Activated T-helper 1 cell treated with anti-CD3 and anti-CD28 coated beads, Interleukin-12 subunit alpha, Interleukin-12 subunit beta, Interleukin-2, Interleukin-4 antibody, amounts not matched to agents 30 ng/mL and 10 ng/mL and 1 ng/mL, durations not matched to agents 14 hours and 24 hours and 36 hours (primary cell): ENCODE measurements at regions of chr17 and their contacts with region 1.

Region 1: DNA sequence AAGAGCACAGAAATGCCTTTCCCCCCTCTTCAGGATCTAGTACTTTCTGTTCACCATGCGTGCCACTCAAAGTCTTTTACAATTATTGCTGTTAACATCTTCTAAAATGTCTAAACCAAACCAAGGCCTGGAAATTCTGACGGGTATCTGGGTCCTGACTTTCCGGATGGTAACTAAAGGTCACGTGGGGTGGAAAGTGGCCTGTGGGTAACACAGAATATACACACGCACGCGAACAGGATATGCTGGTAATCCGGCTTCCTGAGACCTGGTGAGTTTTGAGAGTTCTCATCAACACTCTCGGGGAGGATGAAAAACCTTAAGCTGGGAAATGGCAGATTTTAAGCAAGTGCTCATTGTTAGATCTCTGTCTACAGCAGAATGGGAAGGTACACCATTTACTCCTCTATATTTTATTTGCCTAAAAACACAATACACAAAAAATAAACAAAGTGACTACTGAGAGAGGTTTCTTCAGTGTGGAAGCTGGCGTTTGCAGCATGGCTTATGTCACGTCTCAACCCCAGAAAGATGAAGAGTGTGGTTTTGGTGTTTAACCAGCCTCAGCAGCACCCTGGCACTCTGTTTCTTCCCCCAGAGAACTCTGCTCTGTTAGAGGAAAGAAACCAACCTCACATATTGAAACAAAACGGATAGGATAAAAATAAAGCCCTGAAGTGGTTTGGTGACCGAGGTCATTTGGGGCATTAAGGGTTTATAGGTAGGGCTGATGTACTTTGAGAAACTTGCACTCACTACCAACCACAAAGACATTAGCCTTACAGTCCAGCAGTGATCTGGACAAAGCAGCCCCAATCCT is 37.3 kb downstream of the SMG6 start:
- DNase-seq: peak; percentile 88
- H3K4me3 Mint-ChIP-seq: peak overlapping the region; percentile 74
- H3K27ac Mint-ChIP-seq: peak overlapping the region; percentile 100
- H3K4me1 Mint-ChIP-seq: peaks cover 82% of the 10 kb centered on the region
- H3K27me3 Mint-ChIP-seq: no peaks in the 10 kb centered on the region

Region 2: GRCh38 chr17:1870592-1870991 is 395.7 kb before region 1 on chr17:
- intact Hi-C with region 1: loop called (anchors 1 kb)
- DNase-seq: peak; percentile 28
- H3K4me3 Mint-ChIP-seq: peak overlapping the region; percentile 62
- H3K27ac Mint-ChIP-seq: peak overlapping the region; percentile 99
- H3K4me1 Mint-ChIP-seq: peaks cover 75% of the 10 kb centered on the region
- H3K27me3 Mint-ChIP-seq: no peaks in the 10 kb centered on the region

Region 3: DNA sequence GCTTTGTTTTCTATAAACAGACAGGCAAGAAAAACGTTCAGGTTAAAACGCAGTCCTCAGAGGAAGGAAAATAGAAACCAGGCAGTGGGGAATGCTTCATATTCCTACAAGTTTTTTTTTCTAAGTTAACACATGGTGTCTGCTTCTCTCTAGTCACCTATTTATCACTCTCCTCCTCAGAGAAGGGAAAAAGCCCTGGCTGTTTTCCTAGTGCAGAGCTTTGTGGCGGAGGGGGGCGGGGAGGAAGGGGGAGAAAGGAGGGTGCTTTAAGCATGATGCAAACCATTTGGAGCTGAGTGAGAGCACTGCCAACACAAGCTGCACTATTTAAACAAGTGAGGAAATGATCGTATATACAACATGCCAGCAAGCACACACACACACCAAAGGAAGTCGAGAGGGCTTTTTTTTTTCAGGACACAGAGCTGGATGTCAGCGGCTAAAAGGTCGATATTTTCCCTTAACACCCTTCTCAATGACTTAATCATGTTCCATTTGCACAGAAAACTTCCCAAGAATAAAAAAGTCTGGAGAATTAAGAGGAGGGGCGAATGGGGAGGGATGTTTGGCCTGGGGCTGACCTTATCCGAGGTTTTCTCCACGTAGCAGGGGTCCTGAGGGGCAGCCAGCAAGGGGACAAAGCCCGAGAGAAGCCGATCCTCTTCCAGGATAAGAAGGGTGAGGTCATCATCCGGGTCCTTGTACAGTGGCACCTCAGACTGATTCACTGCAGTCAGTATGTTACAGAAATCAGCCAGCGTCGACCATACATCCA is 94.0 kb before region 1 on chr17:
- intact Hi-C with region 1: no loop called
- DNase-seq: no peak
- H3K4me3 Mint-ChIP-seq: no peak overlapping the region
- H3K27ac Mint-ChIP-seq: no peak overlapping the region
- H3K4me1 Mint-ChIP-seq: peaks cover 27% of the 10 kb centered on the region
- H3K27me3 Mint-ChIP-seq: no peaks in the 10 kb centered on the region

Region 4: GRCh38 chr17:2222901-2223616 is 43.2 kb before region 1 on chr17:
- intact Hi-C with region 1: loop called (anchors 1 kb)
- DNase-seq: peak; percentile 78
- H3K4me3 Mint-ChIP-seq: peak overlapping the region; percentile 65
- H3K27ac Mint-ChIP-seq: peak overlapping the region; percentile 84
- H3K4me1 Mint-ChIP-seq: peaks cover 60% of the 10 kb centered on the region
- H3K27me3 Mint-ChIP-seq: no peaks in the 10 kb centered on the region

Region 5: DNA sequence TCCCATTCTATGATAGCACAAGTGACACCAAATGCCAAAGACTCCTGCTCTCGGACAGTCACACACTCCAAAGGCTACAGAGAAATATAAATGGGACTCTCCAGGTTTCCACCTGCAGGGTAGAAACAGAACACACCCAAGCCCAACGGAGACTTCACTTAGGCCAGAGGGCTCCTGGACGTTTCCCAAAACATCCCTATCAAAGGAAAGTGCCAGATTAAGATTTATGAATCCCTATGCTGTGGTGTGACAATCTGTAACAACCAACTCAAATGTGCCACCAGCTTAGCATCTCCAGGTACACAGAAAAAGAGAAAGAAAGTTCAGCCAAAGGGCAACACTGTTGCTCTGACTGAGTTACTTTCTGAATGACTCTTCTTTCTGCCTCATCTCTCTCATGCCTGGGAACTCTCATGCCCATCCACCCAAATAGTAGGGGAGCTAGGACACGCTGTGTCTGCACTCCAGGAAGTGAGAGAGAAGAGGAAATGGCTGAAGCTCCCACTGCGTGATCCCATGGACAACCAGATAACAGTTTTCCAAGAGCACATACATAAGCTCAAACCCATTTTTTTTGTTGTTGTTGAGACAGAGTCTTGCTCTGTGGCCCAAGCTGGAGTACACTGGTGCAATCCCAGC is 12.4 kb before region 1 on chr17:
- intact Hi-C with region 1: loop called (anchors 1 kb)
- DNase-seq: peak; percentile 53
- H3K4me3 Mint-ChIP-seq: peak overlapping the region; percentile 63
- H3K27ac Mint-ChIP-seq: peak overlapping the region; percentile 97
- H3K4me1 Mint-ChIP-seq: peaks cover 63% of the 10 kb centered on the region
- H3K27me3 Mint-ChIP-seq: no peaks in the 10 kb centered on the region

Region 6: GRCh38 chr17:2282297-2282873 is 16.1 kb after region 1 on chr17:
- intact Hi-C with region 1: loop called (anchors 1 kb)
- DNase-seq: no peak
- H3K4me3 Mint-ChIP-seq: no peak overlapping the region
- H3K27ac Mint-ChIP-seq: peak overlapping the region; percentile 76
- H3K4me1 Mint-ChIP-seq: peaks cover 45% of the 10 kb centered on the region
- H3K27me3 Mint-ChIP-seq: no peaks in the 10 kb centered on the region

Region 7: DNA sequence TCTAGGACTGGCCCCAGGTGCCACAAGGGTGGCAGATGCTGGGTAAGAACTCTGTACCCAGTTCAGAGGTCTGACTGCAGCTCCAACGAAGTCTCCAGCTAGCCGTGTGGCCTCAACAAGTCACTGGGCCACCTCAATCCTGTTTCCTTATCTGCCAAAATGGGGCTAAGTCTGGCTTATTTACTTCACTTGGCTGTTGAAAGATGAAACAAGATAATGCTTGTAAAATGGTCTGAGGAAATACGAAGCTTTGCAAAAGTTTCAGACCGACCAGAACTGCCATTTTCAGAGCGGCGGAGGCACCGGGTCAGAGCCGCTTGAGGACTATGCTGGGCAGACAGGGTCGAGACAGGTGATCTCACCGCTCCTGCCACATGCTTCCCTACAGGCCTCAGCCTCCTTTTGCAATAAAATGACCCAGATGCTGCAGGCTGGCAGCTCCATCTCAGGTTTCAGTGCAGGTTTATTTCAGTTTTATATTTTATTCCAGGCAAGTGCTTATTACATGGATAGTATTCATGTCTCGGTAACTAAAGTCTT is 117.4 kb after region 1 on chr17:
- intact Hi-C with region 1: no loop called
- DNase-seq: no peak
- H3K4me3 Mint-ChIP-seq: no peak overlapping the region
- H3K27ac Mint-ChIP-seq: no peak overlapping the region
- H3K4me1 Mint-ChIP-seq: no peaks in the 10 kb centered on the region
- H3K27me3 Mint-ChIP-seq: no peaks in the 10 kb centered on the region